HCT116 (cell line): ENCODE measurements at regions of chr1 and their contacts with region 1.

Region 1: DNA sequence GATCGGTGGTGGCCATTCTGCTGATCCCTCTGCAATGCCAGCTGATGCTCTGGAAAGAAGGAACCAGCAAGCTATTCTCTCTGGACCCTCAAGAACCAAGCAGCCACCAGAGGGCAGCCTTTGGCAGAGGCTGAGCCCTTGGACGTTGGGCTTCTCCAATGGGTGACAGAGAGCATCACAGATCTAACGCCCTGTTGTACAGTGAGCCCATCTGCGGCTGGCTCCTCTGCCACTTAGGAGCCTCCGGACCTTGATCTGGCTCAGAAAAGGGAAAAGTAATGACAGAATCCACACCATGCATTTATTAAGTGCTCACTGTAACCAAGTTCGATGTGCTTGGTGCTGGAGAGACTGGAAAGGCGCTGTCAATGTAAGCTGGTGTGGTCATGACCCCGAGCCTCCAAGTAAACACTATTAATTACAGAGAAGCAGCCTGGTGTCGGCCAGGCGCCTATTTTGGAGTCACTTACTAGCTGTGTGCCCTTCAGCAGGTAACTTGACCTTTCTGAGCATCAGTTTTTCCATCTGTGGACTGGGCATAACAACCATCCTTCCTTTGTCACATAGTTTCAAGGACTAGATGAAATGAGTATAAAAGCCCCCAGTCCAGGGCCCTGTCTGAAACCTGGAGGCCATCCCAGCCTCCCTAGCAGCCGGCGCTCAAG is 34.9 kb downstream of the ECE1 start:
- DNase-seq: peak; percentile 68
- ATAC-seq: peak; percentile 96
- H3K4me3 ChIP-seq: no peak overlapping the region
- H3K27ac ChIP-seq: no peak overlapping the region
- H3K4me1 ChIP-seq: peaks cover 14% of the 10 kb centered on the region in 2 experiments
- H3K27me3 ChIP-seq: no peaks in the 10 kb centered on the region
- CTCF ChIP-seq: peak; percentile 86 to 92 (median 86)
- POLR2A ChIP-seq: no peak
- RAD21 ChIP-seq: peak; percentile 93

Region 2: DNA sequence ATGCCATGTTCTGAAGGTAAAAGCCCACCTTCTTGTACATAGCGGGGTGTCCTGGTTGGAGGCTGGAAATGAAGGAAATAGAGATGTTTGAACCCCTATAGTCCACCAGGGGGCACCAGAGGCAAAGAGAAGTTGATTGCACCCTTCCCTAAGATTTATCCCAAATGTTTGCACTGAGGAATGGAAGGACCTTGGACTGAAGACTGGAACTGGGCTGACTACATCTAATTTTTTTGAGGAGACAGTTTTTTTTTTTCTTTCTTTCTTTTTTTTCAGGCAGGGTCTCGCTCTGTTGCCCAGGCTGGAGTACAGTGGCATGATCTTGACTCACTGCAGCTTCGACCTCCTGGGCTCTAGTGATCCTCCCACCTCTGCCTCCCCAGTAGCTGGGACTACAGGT is 23.4 kb before region 1 on chr1:
- CTCF ChIA-PET with region 1: interaction called, 10 read pairs
- POLR2A ChIA-PET with region 1: no interaction called
- RAD21 ChIA-PET with region 1: interaction called in 1 of 2 experiments, 5 read pairs
- intact Hi-C with region 1: no loop called
- DNase-seq: peak; percentile 26
- ATAC-seq: peak; percentile 81
- H3K4me3 ChIP-seq: no peak overlapping the region
- H3K27ac ChIP-seq: no peak overlapping the region
- H3K4me1 ChIP-seq: peaks cover 0 to 10% of the 10 kb centered on the region in 2 experiments; a peak in 1 of 4 replicates
- H3K27me3 ChIP-seq: no peaks in the 10 kb centered on the region
- CTCF ChIP-seq: peak; percentile 61 to 83 (median 76)
- POLR2A ChIP-seq: no peak
- RAD21 ChIP-seq: peak; percentile 90

Region 3: GRCh38 chr1:21294266-21294989 is 39.0 kb after region 1 on chr1:
- CTCF ChIA-PET with region 1: interaction called, 4 read pairs
- POLR2A ChIA-PET with region 1: no interaction called
- RAD21 ChIA-PET with region 1: no interaction called
- intact Hi-C with region 1: loop called (anchors 1 kb)
- DNase-seq: peak; percentile 47
- ATAC-seq: peak; percentile 57
- H3K4me3 ChIP-seq: peak overlapping the region in 1 of 2 experiments; percentile 29; a peak in 2 of 4 replicates
- H3K27ac ChIP-seq: peak overlapping the region; percentile 42
- H3K4me1 ChIP-seq: peaks cover 45 to 85% of the 10 kb centered on the region in 2 experiments
- H3K27me3 ChIP-seq: no peaks in the 10 kb centered on the region
- CTCF ChIP-seq: no peak
- POLR2A ChIP-seq: no peak
- RAD21 ChIP-seq: no peak

Region 4: GRCh38 chr1:21324368-21325141 is 69.1 kb after region 1 on chr1:
- CTCF ChIA-PET with region 1: interaction called, 13 read pairs
- POLR2A ChIA-PET with region 1: no interaction called
- RAD21 ChIA-PET with region 1: interaction called in 1 of 2 experiments, 3 read pairs
- intact Hi-C with region 1: no loop called
- DNase-seq: peak; percentile 94
- ATAC-seq: peak; percentile 90
- H3K4me3 ChIP-seq: peak overlapping the region; percentile 20 to 42
- H3K27ac ChIP-seq: peak overlapping the region; percentile 84
- H3K4me1 ChIP-seq: peaks cover 73 to 94% of the 10 kb centered on the region in 2 experiments
- H3K27me3 ChIP-seq: no peaks in the 10 kb centered on the region
- CTCF ChIP-seq: no peak
- POLR2A ChIP-seq: no peak
- RAD21 ChIP-seq: no peak

Region 5: DNA sequence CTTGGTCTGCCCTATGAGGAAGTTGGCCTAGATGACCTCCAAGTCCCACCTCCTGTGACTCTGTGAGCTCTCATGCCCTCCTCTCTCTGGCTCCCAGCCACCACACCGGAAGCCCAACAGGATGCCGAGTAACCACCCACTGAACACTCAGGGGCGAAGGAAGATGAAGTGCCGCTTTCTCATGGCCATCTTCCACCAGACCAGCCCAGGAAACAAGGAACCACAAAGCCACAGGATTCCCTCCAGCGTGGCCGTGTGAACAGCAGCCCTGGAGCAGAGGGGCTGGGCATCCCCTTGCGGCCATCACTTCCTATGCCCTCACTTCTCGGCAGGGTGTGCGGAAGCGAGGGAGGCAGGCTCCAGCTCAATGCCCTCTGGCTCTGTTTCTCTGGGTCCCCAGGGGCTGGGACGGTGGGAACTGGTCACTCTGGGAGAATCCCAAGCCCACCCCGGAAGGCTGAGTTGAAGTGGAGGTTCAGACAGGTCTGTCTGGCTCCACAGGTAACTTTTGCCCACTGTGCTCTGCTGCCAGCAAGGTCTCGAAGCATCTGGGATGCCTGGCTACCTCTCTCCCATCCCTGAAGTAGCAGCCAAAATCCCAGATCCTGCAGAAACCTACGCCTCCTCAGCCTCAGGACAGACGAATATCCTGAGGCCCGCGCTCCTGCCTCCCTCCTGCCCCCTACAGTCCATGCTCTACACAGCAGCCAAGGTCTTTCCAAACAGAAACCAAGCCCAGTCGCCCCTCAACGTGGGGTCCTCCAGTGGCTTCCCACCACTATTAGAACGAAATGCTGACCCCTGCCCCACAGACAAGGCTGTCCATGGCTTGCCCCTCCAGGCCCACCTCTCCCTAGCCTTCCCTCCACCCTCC is 79.0 kb after region 1 on chr1:
- CTCF ChIA-PET with region 1: interaction called, 13 read pairs
- POLR2A ChIA-PET with region 1: interaction called, 3 read pairs
- RAD21 ChIA-PET with region 1: no interaction called
- intact Hi-C with region 1: no loop called
- DNase-seq: no peak
- ATAC-seq: peak; percentile 85
- H3K4me3 ChIP-seq: no peak overlapping the region
- H3K27ac ChIP-seq: peak overlapping the region; percentile 66
- H3K4me1 ChIP-seq: peaks cover 58 to 72% of the 10 kb centered on the region in 2 experiments
- H3K27me3 ChIP-seq: no peaks in the 10 kb centered on the region
- CTCF ChIP-seq: peak; percentile 71 to 90 (median 77)
- POLR2A ChIP-seq: no peak
- RAD21 ChIP-seq: peak; percentile 82